Activated naive CD8-positive, alpha-beta T cell treated with anti-CD3 and anti-CD28 coated beads, Interleukin-2, amount 10 ng/mL, durations not matched to agents 7 days and 5 days (primary cell): ENCODE measurements at regions of chr22 and their contacts with region 1.

Region 1: DNA sequence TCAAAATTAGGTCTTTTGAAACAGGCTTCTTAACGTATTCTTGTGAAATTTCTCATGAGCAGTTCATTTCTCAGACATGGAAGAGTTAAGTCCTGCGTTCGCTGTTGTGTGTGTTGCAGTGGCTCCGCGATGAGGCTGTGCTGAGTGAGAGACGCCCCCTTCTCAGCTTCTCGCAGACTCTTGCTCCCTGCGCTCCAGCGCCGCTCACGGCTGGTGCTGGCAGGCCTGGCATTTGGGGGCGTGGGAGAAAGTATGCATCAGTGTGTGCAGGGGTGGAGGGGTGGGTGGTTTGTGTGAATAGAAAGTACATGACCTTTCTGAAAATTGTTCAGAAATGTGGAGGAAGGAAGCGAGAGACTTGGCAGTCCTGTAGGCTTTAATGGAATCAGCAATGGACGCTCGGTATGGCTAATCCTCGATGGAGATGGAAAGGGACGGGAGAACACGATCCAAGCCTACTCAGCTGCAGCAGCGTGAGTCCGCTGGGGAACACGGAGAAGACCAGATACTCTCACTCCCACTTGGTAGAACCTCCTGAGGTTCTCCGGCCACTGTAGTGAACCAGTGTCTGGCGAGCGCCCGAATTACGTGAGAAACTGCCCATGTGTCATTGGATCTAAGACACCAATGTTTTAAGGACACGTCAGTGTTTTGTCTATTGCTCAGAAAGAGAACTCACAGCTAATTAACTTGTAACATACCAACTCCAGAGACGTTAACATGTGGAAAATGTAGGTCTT is 5.9 kb downstream of the TAB1 start:
- DNase-seq: no peak
- ATAC-seq: no peak
- H3K4me3 Mint-ChIP-seq: no peak overlapping the region
- H3K27ac Mint-ChIP-seq: no peak overlapping the region
- H3K4me1 Mint-ChIP-seq: peaks cover 38% of the 10 kb centered on the region
- H3K27me3 Mint-ChIP-seq: no peaks in the 10 kb centered on the region

Region 2: GRCh38 chr22:39380999-39381755 is 24.3 kb before region 1 on chr22:
- POLR2A ChIA-PET with region 1: no interaction called
- DNase-seq: no peak
- ATAC-seq: no peak
- H3K4me3 Mint-ChIP-seq: no peak overlapping the region
- H3K27ac Mint-ChIP-seq: no peak overlapping the region
- H3K4me1 Mint-ChIP-seq: no peaks in the 10 kb centered on the region
- H3K27me3 Mint-ChIP-seq: no peaks in the 10 kb centered on the region

Region 3: GRCh38 chr22:39446295-39446721 is 40.8 kb after region 1 on chr22:
- POLR2A ChIA-PET with region 1: interaction called, 15 read pairs
- DNase-seq: peak; percentile 50
- ATAC-seq: peak; percentile 31
- H3K4me3 Mint-ChIP-seq: peak overlapping the region; percentile 86
- H3K27ac Mint-ChIP-seq: peak overlapping the region; percentile 98
- H3K4me1 Mint-ChIP-seq: peaks cover 42% of the 10 kb centered on the region
- H3K27me3 Mint-ChIP-seq: no peaks in the 10 kb centered on the region